ENCODE measurements at regions of chr2 and their contacts with region 1.

Region 1: DNA sequence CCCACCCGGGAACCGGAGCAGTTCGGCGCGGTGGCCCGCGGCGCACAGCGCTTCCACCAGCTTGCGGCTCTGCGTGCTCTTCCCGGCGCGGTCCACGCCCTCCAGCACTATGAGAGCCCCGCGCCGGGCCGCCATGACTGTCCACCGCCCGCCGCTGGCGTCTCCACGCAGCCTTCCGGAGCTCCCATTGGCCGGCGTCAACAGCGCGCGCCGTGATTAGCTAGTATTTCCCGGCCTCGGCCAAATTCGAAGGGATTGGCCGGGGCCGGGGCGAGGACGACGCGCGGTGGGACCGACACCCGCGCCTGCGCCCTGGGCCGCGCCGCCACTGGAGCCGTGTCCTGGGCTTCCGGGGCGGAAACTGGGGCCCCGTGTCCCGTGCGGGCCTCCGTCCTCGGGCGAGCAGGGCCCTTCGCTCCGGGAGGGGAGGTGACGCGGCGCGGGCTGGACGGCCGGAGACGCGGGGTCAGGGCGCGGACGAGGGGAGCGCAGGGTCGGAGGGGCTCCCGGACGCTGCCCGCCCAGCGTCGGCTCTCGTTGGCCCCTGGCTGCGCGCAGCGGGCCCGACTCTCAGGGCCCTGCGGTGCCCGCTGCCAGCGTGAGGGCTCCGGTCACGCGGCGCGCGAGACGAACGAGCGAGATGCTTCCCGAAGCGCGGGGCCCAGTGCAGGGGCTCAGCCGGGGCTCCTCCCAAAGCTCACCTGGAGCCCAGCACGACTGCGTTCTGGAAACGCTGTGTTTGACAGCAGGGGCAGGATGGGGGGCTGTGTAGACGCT is at the start of gene DTYMK:
- DNase-seq: peak; percentile 96
- H3K4me3 Mint-ChIP-seq: peak within 1 kb of the TSS; percentile 88
- H3K27ac Mint-ChIP-seq: peak within 1 kb of the TSS; percentile 96
- H3K4me1 Mint-ChIP-seq: peaks cover 15% of the 10 kb centered on the region
- H3K27me3 Mint-ChIP-seq: no peaks in the 10 kb centered on the region
- total RNA-seq, gene DTYMK: 95.9 and 98.2 TPM in 2 replicates

Region 2: GRCh38 chr2:241102239-241102803 is 584.5 kb before region 1 on chr2 and contains the start of gene MTERF4:
- intact Hi-C with region 1: loop called (anchors 1 kb)
- DNase-seq: peak; percentile 85
- H3K4me3 Mint-ChIP-seq: peak within 1 kb of the TSS; percentile 94
- H3K27ac Mint-ChIP-seq: peak within 1 kb of the TSS; percentile 97
- H3K4me1 Mint-ChIP-seq: peaks cover 23% of the 10 kb centered on the region
- H3K27me3 Mint-ChIP-seq: no peaks in the 10 kb centered on the region
- total RNA-seq, gene MTERF4: 34.4 and 35.4 TPM in 2 replicates

Region 3: DNA sequence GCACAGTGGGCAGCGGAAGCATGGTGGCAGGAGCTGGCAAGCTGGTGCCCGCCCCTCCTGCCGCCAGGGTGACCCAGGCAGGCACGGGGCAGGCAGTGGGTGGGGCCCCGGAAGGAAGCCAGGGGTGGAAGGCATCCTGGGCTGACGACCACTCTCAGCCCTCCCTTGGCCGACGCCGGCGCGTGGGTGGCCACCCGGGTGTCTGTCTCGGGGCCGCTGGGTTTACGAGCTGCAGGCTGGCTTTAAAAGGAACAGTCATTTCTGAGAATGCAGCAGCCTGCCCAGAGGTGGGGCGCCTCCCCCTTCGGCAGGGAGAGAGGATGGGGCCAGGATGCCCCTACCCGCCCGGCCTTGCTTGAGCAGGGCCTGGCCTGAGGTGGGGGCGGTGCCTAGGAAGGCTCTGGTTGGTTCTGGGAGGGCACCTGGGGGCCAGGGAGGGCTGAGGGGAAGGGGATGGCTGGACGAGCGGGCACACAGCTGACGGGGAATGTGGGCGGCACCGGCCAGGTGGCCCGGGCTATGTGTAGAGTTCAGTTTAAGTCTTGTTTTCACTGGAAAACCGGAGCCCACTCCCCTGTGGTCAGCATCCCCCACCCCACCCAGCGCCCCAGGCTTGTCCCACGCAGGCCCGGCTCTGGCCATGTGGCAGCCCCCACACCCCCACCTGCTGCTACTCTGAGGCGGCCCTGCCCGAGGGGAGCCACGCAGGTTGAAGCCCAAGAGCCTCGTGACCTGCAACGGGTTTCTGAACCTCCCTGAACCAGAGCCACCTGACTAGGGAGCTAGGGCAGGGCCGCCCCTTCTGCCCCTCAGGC is 122.0 kb before region 1 on chr2:
- intact Hi-C with region 1: no loop called
- DNase-seq: no peak
- H3K4me3 Mint-ChIP-seq: no peak overlapping the region
- H3K27ac Mint-ChIP-seq: no peak overlapping the region
- H3K4me1 Mint-ChIP-seq: no peaks in the 10 kb centered on the region
- H3K27me3 Mint-ChIP-seq: peaks cover 7% of the 10 kb centered on the region

Region 4: DNA sequence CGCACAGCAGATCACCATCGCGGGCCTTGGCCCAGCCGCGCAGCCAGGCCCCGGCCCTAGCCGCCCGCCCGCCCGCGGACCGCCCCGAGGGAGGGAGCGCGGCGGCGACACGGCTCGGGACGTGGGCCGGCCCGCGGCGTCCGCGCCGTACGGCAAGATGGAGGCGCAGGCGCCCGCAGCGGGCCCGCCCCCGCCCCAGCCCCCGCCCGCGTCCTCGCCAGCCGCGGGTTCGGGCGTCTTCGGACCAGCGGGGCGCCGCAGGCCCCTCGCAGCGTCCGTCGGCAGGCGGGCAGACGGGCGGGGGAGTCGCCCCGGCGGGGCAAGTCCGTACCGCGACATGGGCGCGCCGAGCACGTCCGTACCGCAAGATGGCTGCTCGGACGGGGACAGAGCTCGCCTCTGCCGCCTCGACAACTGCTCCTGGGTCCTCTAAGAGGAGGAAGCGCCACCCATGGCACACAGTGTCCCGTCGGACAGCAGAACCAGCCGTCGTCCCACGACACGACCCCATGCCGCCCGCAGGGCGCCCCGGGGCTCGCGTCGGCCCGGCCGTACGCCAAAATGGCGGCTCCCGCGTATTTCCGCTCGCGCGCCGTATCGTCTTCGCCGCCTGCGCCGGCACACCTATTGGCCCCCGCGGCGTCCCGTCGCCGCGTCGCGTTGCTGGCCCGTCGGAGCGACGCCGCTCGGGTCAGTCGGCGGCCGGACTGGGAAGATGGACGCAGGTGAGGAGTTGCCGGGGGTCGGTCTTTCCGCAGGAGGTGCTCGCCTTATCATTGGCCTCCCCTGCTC is 49.6 kb before region 1 on chr2 and contains the starts of genes ATG4B and THAP4:
- intact Hi-C with region 1: loop called (anchors 2 kb)
- DNase-seq: peak; percentile 79
- H3K4me3 Mint-ChIP-seq: peak within 1 kb of the TSS; percentile 94
- H3K27ac Mint-ChIP-seq: peak within 1 kb of the TSS; percentile 92
- H3K4me1 Mint-ChIP-seq: peaks cover 42% of the 10 kb centered on the region
- H3K27me3 Mint-ChIP-seq: no peaks in the 10 kb centered on the region
- total RNA-seq, gene ATG4B: 117 TPM in 2 replicates
- total RNA-seq, gene THAP4: 48.7 and 53.3 TPM in 2 replicates

Region 5: DNA sequence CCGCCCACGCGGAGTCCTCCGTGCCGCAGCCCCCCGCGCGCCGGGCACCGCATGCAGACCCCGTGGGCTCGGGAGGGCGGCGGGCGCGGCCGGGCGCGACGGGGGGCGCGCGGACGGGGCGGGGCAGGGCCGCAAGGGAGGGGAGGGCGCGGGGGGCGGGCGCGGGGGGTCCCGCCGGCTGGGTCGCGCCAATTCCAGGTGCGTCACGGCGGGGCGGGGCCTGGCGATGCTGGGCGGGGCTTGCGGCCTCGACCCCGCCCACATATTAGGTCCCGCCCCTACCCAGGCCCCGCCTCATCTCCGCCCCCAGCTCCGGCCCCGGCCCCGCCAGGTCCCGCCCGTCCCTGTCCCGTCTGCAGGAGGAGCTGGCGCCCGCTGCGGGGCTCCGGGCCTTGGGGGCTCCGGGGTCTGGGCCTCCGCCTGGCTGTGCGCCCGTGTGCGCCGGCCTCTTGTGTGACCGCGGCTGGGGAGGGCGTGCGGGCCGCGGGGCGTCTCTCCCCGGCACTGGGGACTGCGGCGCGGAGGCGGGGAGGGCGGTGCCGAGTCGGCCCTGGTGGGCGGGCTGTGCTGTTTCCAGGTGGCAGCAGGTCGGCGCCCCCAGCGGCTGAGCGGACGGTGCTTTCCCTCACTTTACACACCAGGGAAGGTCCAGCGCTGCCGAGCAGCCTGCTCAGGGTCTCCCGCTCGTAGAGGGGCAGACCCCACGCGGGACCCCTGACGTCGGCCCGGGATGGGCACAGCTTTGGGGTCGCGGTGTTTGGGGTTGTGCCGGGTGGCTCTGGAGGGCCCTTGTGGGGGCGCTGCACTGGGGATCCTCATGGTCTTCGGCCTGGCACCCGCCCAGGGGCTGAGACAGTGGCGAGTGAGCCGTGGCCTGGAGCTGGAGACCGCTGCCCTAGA is 15.5 kb after region 1 on chr2:
- intact Hi-C with region 1: loop called (anchors 1 kb)
- DNase-seq: peak; percentile 81
- H3K4me3 Mint-ChIP-seq: peak overlapping the region; percentile 81
- H3K27ac Mint-ChIP-seq: peak overlapping the region; percentile 59
- H3K4me1 Mint-ChIP-seq: peaks cover 13% of the 10 kb centered on the region
- H3K27me3 Mint-ChIP-seq: no peaks in the 10 kb centered on the region

Region 6: DNA sequence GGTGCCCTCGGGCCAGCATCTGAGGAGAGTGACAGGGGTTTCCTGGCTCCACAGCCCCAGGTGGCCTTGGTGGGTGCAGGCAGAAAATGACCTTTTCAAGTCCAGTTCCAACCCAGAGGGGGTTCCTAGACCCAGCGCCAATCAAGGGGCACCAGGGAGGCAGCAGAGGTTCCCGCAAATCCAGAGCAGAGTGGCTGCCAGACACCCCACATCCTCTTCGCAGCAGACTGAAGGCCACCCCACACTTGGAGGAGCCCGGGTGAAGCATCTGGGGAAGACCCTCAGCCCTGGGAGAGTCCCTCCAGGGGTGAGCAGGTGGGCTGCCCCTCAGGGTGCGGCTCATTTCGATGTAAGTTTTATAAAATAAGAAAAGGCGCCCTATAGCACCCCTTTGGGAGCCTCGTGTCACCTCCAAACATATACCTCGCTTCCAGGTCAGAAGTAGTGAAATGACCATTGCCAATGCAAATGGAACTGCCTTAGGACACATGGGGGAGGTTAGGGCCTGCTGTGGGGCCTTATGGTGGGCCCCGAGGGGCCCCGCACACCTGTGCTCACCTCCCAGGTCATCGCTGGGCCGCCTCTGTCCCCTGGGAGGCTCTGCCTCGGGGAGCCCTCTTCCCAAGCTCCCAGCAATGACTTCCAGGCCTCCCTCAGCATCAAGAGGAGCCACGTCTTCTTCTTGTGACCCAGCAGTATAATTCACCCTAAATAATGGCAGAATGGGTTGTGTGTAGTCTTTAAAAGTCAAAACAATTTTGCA is 193.7 kb after region 1 on chr2:
- intact Hi-C with region 1: loop called (anchors 1 kb)
- DNase-seq: no peak
- H3K4me3 Mint-ChIP-seq: peak overlapping the region; percentile 89
- H3K27ac Mint-ChIP-seq: peak overlapping the region; percentile 90
- H3K4me1 Mint-ChIP-seq: peaks cover 18% of the 10 kb centered on the region
- H3K27me3 Mint-ChIP-seq: no peaks in the 10 kb centered on the region